ENCODE measurements at regions of chr7 and their contacts with region 1.

Region 1: GRCh38 chr7:149284850-149285626 is 23.0 kb downstream of the ZNF783 start:
- DNase-seq: peak; percentile 99
- H3K4me3 Mint-ChIP-seq: peak overlapping the region; percentile 79
- H3K27ac Mint-ChIP-seq: no peak overlapping the region
- H3K4me1 Mint-ChIP-seq: peaks cover 36% of the 10 kb centered on the region
- H3K27me3 Mint-ChIP-seq: no peaks in the 10 kb centered on the region

Region 2: GRCh38 chr7:149195180-149196150 is 89.6 kb before region 1 on chr7 and contains the start of gene ZNF282:
- CTCF ChIA-PET with region 1: interaction called, 5 read pairs
- intact Hi-C with region 1: loop called (anchors 1 kb)
- DNase-seq: peak; percentile 85
- H3K4me3 Mint-ChIP-seq: peak within 1 kb of the TSS; percentile 85
- H3K27ac Mint-ChIP-seq: peak within 1 kb of the TSS; percentile 78
- H3K4me1 Mint-ChIP-seq: peaks cover 30% of the 10 kb centered on the region
- H3K27me3 Mint-ChIP-seq: no peaks in the 10 kb centered on the region
- total RNA-seq, gene ZNF282: 21.6 to 22.0 TPM

Region 3: GRCh38 chr7:149239345-149240191 is 45.5 kb before region 1 on chr7 and contains the start of gene ZNF212:
- CTCF ChIA-PET with region 1: interaction called, 3 read pairs
- intact Hi-C with region 1: loop called (anchors 1 kb)
- DNase-seq: peak; percentile 93
- H3K4me3 Mint-ChIP-seq: peak within 1 kb of the TSS; percentile 89
- H3K27ac Mint-ChIP-seq: peak within 1 kb of the TSS; percentile 90
- H3K4me1 Mint-ChIP-seq: peaks cover 38% of the 10 kb centered on the region
- H3K27me3 Mint-ChIP-seq: no peaks in the 10 kb centered on the region
- total RNA-seq, gene ZNF212: 9.0 to 10.4 TPM

Region 4: DNA sequence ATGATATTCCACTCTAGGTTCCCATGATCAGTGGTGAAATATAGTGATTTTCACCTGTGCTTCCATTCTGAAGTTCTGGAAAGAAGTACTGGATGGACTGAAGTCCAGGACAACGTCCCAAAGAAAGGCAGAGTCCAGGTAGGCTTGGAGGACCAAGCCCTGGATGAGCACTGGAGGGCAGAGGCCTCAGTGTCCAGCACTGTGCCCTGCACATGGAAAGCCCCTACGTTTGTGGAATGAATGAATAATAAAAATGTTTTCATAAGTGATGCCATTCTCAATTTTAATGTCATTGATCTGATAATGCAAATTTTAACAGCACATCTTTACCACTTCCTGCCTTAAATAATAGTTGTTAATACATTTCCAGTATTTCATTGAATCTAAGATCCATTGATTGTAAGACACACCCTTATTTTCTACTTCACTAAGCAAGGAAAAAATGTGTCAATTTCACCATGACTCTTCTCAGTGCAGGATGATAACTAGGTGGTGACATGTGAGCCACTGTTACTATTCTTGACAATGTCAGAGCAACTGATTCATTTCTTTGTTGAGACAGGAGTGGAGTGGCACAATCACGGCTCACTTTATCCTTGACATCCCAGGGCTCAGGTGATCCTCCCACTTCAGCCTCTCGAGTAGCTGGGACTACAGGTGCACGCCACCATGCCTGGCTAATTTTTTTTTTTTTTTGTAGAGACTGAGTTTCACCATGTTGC is 12.2 kb after region 1 on chr7:
- CTCF ChIA-PET with region 1: no interaction called
- intact Hi-C with region 1: loop called (anchors 1 kb)
- DNase-seq: peak; percentile 51
- H3K4me3 Mint-ChIP-seq: no peak overlapping the region
- H3K27ac Mint-ChIP-seq: peak overlapping the region; percentile 84
- H3K4me1 Mint-ChIP-seq: peaks cover 17% of the 10 kb centered on the region
- H3K27me3 Mint-ChIP-seq: no peaks in the 10 kb centered on the region